ENCODE measurements at regions of chr5 and their contacts with region 1.

Region 1: DNA sequence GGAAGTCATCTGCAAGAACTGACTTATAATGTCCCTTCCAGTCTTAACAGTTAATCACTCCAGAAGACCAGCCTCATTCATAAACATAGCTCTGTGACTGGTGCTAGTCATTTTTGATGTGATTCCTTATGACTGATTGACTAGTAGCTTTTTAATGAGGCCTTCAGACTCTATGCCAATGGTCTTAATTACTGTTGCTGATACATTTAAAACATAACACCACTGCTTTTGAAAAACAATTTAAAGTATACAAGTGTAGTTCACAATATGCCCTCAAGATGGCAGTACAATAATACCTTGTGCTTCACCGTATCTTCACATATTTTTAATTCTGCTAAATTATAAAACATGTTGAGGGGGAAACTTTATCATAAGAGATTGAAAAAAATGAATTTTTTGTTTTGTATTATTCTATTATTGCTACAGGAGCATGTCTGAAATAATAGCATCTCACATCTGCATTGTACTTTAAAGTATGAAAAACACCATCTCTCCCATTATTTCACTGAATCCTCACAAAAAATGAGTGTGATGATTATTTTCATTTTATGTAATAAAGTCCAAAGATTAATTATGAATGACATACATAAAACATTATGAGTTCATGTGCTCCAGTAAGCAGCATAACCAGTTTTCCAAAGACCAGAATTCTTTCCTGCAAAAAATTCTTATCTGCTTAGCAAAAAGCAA is 55.2 kb upstream of the SHISAL2B start:
- DNase-seq: peak; percentile 39
- ATAC-seq: peak; percentile 80
- H3K4me3 ChIP-seq: no peak overlapping the region
- H3K27ac ChIP-seq: no peak overlapping the region
- H3K4me1 ChIP-seq: no peaks in the 10 kb centered on the region; the same call in 1 of the 2 replicates
- H3K27me3 ChIP-seq: peaks cover 14% of the 10 kb centered on the region
- CTCF ChIP-seq: peak; percentile 85
- POLR2A ChIP-seq: no peak
- RAD21 ChIP-seq: peak; percentile 84

Region 2: DNA sequence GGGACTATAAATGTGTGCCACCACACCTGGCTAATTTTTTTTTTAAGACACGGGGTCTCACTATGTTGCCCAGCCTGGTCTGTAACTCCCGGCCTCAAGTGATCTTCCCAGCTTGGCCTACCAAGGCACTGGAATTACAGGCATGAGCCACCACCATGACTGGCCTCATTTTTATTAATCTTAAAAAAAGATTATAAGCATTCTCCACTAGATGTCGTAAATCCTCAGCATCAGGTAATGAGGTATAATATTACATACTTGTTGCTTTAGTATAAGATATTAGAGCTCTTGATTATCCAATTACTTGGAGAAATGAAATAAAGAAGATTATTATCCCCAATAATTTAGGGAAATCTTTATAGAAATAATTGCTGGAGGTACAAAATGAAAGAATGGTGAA is 594.7 kb before region 1 on chr5:
- CTCF ChIA-PET with region 1: no interaction called
- POLR2A ChIA-PET with region 1: no interaction called
- dilution Hi-C with region 1: no loop called
- in situ Hi-C with region 1: no loop called
- intact Hi-C with region 1: no loop called
- DNase-seq: no peak
- ATAC-seq: no peak
- H3K4me3 ChIP-seq: no peak overlapping the region
- H3K27ac ChIP-seq: no peak overlapping the region
- H3K4me1 ChIP-seq: no peaks in the 10 kb centered on the region
- H3K27me3 ChIP-seq: no peaks in the 10 kb centered on the region
- CTCF ChIP-seq: no peak
- POLR2A ChIP-seq: no peak
- RAD21 ChIP-seq: no peak

Region 3: GRCh38 chr5:64595031-64595855 is 39.9 kb before region 1 on chr5:
- CTCF ChIA-PET with region 1: no interaction called
- POLR2A ChIA-PET with region 1: no interaction called
- dilution Hi-C with region 1: no loop called
- in situ Hi-C with region 1: no loop called
- intact Hi-C with region 1: no loop called
- DNase-seq: no peak
- ATAC-seq: no peak
- H3K4me3 ChIP-seq: no peak overlapping the region
- H3K27ac ChIP-seq: no peak overlapping the region
- H3K4me1 ChIP-seq: no peaks in the 10 kb centered on the region
- H3K27me3 ChIP-seq: peaks cover 1% of the 10 kb centered on the region; the same call in 1 of the 2 replicates
- CTCF ChIP-seq: no peak
- POLR2A ChIP-seq: no peak
- RAD21 ChIP-seq: no peak

Region 4: GRCh38 chr5:64768358-64769312 is 133.5 kb after region 1 on chr5 and contains the starts of genes CWC27 and SREK1IP1:
- CTCF ChIA-PET with region 1: no interaction called
- POLR2A ChIA-PET with region 1: no interaction called
- dilution Hi-C with region 1: no loop called
- in situ Hi-C with region 1: no loop called
- intact Hi-C with region 1: loop called (anchors 5 kb)
- DNase-seq: peak; percentile 93
- ATAC-seq: peak; percentile 98
- H3K4me3 ChIP-seq: peak within 1 kb of the TSS; percentile 84
- H3K27ac ChIP-seq: peak within 1 kb of the TSS; percentile 93
- H3K4me1 ChIP-seq: peaks cover 5% of the 10 kb centered on the region
- H3K27me3 ChIP-seq: no peaks in the 10 kb centered on the region
- CTCF ChIP-seq: 0 out of 2 replicates have a peak, but pooled peaks have one; percentile 14
- POLR2A ChIP-seq: peak; percentile 89
- RAD21 ChIP-seq: no peak
- total RNA-seq, gene CWC27: 13.3 and 34.4 TPM in 2 replicates
- total RNA-seq, gene SREK1IP1: 6.5 and 8.3 TPM in 2 replicates

Region 5: DNA sequence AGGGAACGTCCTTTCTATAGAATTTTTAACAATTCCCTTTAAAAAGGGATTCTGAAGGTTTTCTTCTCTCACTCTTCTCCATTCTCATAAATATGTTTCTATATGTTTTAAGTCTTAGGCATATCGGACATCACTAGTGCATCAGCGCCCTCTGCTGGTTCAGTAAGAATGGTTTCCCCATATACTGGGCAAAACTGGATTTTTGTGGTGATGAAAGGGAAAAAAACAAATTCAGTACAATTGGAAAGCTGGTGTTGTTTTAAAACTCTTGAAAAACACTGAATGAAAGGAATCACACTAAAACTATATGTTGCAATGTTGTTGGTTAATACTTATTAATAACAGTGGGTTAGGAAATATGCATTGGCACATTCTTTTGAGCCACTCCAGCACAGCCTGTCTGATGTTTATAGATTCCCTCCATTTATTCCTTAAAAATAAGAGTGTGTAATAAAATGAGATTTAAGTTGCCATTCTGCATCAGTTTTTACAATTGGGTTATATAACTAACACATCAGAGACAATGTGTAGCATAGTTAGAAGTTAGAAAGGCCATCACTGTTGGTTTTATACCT is 149.4 kb after region 1 on chr5:
- CTCF ChIA-PET with region 1: interaction called, 4 read pairs
- POLR2A ChIA-PET with region 1: no interaction called
- dilution Hi-C with region 1: no loop called
- in situ Hi-C with region 1: loop called (anchors 5 kb)
- intact Hi-C with region 1: loop called (anchors 1 kb)
- DNase-seq: peak; percentile 86
- ATAC-seq: peak; percentile 93
- H3K4me3 ChIP-seq: no peak overlapping the region
- H3K27ac ChIP-seq: no peak overlapping the region
- H3K4me1 ChIP-seq: no peaks in the 10 kb centered on the region
- H3K27me3 ChIP-seq: no peaks in the 10 kb centered on the region
- CTCF ChIP-seq: peak; percentile 84
- POLR2A ChIP-seq: no peak
- RAD21 ChIP-seq: peak; percentile 85

Region 6: GRCh38 chr5:64958757-64959391 is 323.7 kb after region 1 on chr5:
- CTCF ChIA-PET with region 1: no interaction called
- POLR2A ChIA-PET with region 1: no interaction called
- dilution Hi-C with region 1: no loop called
- in situ Hi-C with region 1: no loop called
- intact Hi-C with region 1: loop called (anchors 10 kb)
- DNase-seq: peak; percentile 72
- ATAC-seq: no peak; the same call in 1 of the 2 replicates
- H3K4me3 ChIP-seq: no peak overlapping the region
- H3K27ac ChIP-seq: peak overlapping the region; percentile 56; the same call in 1 of the 2 replicates
- H3K4me1 ChIP-seq: peaks cover 3% of the 10 kb centered on the region; the same call in 1 of the 2 replicates
- H3K27me3 ChIP-seq: no peaks in the 10 kb centered on the region
- CTCF ChIP-seq: peak; percentile 68
- POLR2A ChIP-seq: no peak
- RAD21 ChIP-seq: peak; percentile 76

Region 7: GRCh38 chr5:65562731-65563701 is 927.9 kb after region 1 on chr5 and contains the starts of genes CENPK and PPWD1:
- CTCF ChIA-PET with region 1: no interaction called
- POLR2A ChIA-PET with region 1: no interaction called
- dilution Hi-C with region 1: no loop called
- in situ Hi-C with region 1: no loop called
- intact Hi-C with region 1: loop called (anchors 10 kb)
- DNase-seq: peak; percentile 94
- ATAC-seq: peak; percentile 100
- H3K4me3 ChIP-seq: peak within 1 kb of the TSS; percentile 71
- H3K27ac ChIP-seq: peak within 1 kb of the TSS; percentile 81
- H3K4me1 ChIP-seq: no peaks in the 10 kb centered on the region; the same call in 1 of the 2 replicates
- H3K27me3 ChIP-seq: no peaks in the 10 kb centered on the region
- CTCF ChIP-seq: no peak
- POLR2A ChIP-seq: peak; percentile 81
- RAD21 ChIP-seq: no peak
- total RNA-seq, gene CENPK: 5.6 and 13.6 TPM in 2 replicates
- total RNA-seq, gene PPWD1: 17.9 and 30.8 TPM in 2 replicates

Measured in IMR-90 (cell line).